HCT116 (cell line): ENCODE measurements at regions of chr3 and their contacts with region 1.

Region 1: DNA sequence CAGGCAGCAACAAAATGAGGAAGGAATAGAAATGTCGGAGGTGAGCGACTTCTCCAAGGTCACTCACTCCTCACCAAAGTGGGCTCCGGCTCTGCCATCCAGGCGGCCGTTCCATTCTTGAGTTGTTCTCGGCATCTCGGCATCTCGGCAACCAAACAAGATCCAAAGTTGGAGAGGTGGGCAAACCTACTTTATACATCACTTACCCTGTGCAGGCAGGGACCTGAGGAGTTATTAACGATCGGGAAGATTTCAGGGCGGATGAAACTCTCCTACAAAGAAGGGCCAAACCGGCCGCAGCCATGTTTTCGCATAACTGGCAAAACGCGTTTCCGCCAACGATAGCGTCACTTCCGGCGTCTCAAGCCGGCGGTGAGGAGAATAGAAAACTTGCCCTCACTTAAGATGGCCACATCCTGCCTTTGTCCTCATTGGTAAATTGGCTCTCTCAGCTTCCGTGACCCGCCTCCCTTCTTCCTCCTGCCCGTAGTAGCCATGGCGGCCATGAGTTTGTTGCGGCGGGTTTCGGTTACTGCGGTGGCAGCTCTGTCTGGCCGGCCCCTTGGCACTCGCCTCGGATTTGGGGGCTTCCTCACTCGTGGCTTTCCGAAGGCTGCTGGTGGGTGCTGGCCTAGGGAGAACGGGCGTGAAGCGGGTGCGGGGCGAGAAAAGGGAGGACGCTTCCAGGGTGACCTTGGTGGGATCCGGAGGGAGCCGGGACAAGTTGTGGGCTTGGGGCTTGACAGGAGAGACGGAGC is at the starts of genes MRPL47 and NDUFB5:
- DNase-seq: peak; percentile 91
- ATAC-seq: peak; percentile 99
- H3K4me3 ChIP-seq: peak within 1 kb of the TSS; percentile 76 to 87
- H3K27ac ChIP-seq: peak within 1 kb of the TSS; percentile 69
- H3K4me1 ChIP-seq: peaks cover 5 to 8% of the 10 kb centered on the region in 2 experiments; a peak in 3 of 4 replicates
- H3K27me3 ChIP-seq: no peaks in the 10 kb centered on the region
- CTCF ChIP-seq: no peak
- POLR2A ChIP-seq: peak; percentile 87
- RAD21 ChIP-seq: no peak; the same call in 1 of the 2 replicates
- total RNA-seq, gene MRPL47: 52.3 TPM
- total RNA-seq, gene NDUFB5: 116 TPM

Region 2: DNA sequence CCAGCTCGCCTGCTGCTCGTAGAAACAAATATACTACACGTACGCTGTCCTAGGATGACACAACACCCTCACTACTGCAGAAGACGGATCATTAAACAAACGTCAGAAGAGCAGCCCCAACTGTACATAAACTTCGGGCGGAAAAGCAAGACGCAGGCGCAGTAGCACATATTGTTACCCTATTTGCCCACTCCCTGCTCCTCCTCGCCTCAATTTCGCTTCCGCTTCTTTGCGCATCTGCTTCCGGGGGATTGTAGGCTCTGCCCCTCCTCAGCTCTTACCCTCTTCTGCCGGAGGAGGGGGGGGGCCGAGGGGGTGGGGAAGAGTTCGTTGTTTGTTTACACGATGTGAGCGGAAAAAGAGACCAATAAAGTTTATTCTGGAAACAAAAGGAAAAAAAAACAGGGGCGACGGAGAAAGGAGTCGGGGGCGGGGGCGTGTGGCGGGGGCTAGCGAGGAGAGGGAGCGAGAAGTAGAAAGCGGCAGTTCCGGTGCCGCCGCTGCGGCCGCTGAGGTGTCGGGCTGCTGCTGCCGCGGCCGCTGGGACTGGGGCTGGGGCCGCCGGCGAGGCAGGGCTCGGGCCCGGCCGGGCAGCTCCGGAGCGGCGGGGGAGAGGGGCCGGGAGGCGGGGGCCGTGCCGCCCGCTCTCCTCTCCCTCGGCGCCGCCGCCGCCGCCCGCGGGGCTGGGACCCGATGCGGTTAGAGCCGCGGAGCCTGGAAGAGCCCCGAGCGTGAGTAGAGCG is 456.5 kb before region 1 on chr3 and contains the start of gene PIK3CA:
- CTCF ChIA-PET with region 1: no interaction called
- POLR2A ChIA-PET with region 1: no interaction called
- RAD21 ChIA-PET with region 1: no interaction called
- intact Hi-C with region 1: loop called (anchors 2 kb)
- DNase-seq: peak; percentile 94
- ATAC-seq: peak; percentile 85
- H3K4me3 ChIP-seq: peak within 1 kb of the TSS; percentile 65 to 84
- H3K27ac ChIP-seq: peak within 1 kb of the TSS; percentile 77
- H3K4me1 ChIP-seq: peaks cover 0 to 14% of the 10 kb centered on the region in 2 experiments; a peak in 3 of 4 replicates
- H3K27me3 ChIP-seq: no peaks in the 10 kb centered on the region
- CTCF ChIP-seq: no peak
- POLR2A ChIP-seq: peak; percentile 65
- RAD21 ChIP-seq: no peak
- total RNA-seq, gene PIK3CA: 17.9 TPM